ENCODE measurements at regions of chr5 and their contacts with region 1.

Region 1: GRCh38 chr5:57499262-57500050 is 16.8 kb upstream of the ACTBL2 start:
- DNase-seq: peak in 32 of 42 donors; percentile 10 to 76 (median 44)

Region 2: GRCh38 chr5:57298295-57298984 is 201.0 kb before region 1 on chr5:
- intact Hi-C with region 1: loop called (anchors 10 kb)
- DNase-seq: peak; percentile 59 to 96 (median 86)

Region 3: GRCh38 chr5:57566914-57567313 is 67.5 kb after region 1 on chr5:
- intact Hi-C with region 1: no loop called
- DNase-seq: peak in 1 of 42 donors; percentile 33

Region 4: DNA sequence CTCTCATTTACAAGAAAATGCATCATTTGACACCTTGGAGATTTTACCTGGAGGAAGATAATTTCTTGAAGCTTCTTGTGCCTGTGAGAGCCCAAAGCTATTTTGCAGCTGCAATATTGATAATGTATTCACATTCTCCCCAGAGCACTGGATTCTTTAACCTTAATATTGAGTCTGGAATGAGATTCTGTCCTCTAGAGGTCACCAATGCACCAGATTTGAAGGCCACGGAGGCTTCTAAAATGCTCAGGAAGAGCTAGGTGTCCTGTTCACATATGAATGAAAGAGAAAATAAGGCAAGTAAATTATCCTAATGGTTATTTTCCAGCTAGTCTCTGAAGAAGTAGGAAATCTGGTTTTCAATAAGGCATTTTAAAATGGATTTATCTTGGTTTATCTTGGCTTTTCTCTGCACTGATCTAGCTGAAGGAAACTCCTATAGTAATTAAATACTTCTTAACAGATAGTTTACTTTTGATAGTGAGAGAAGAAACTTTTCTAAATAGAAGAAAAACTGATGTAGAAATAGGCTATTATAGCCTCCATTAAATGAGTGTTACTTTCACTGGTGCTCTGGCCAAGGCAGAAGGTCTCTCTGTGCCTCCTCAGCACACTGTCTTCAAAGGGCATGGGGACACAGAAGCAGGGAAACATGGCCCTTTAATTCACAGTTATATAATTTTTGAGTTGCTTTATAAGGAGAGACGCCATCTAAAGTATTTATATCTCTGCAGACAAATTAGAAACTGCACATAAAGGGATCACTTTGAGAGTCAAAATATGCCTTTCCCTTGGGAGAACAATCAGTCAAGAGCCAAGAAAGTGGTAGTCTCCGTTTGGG is 280.1 kb after region 1 on chr5:
- intact Hi-C with region 1: loop called (anchors 10 kb)
- DNase-seq: peak in 35 of 42 donors; percentile 9 to 81 (median 57)

Measured in head of caudate nucleus (tissue), 42 donors.